Naive thymus-derived CD4-positive, alpha-beta T cell (primary cell): ENCODE measurements at regions of chr6 and their contacts with region 1.

Region 1: DNA sequence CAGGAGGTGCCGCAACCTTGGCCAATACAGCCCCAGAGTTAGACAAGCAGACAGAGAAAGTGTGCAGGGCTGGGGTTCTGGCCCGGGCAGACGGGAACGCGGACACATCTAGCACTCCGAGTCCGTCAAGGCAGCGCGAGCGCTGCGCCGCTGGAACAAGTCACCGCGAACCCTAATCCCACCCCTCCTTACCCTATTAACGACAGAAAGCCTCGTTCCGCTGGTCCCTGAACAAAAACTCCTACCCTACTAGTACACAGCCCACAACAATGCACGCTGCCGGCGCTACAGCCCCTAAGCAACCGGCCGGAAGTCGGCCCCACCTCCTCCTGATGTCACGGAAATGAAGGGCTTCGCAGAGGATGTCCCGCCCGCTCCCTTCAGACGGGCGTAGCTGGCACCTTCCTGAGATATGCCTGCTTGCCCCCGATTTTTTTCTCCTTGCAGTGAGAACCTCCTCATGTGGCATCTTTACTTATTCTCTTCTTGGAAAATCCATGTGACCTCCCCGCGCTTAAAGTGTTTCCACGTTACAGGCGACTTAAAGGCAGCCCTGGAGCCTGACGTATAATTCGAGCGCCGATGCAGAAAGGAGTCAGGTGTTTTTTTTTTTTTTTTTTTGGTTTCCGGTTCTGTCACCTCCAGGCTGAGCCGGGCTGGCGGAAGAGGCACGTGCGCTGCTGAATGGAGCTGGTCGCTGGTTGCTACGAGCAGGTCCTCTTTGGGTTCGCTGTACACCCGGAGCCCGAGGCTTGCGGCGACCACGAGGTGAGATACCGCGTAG is at the starts of genes C6orf52 and PAK1IP1:
- DNase-seq: peak; percentile 77 to 97 (median 96)
- ATAC-seq: peak; percentile 95
- H3K4me3 ChIP-seq: peak within 1 kb of the TSS; percentile 99
- H3K4me3 Mint-ChIP-seq: peak within 1 kb of the TSS; percentile 88 to 98 (median 94)
- H3K27ac ChIP-seq: peak within 1 kb of the TSS; percentile 90
- H3K27ac Mint-ChIP-seq: peak within 1 kb of the TSS; percentile 99 to 100 (median 100)
- H3K4me1 ChIP-seq: peaks cover 13 to 18% of the 10 kb centered on the region in 2 donors
- H3K4me1 Mint-ChIP-seq: peaks cover 20 to 52% (median 49%) of the 10 kb centered on the region in 7 donors
- H3K27me3 ChIP-seq: no peaks in the 10 kb centered on the region
- H3K27me3 Mint-ChIP-seq: peaks cover 0 to 4% (median 0%) of the 10 kb centered on the region in 5 donors
- total RNA-seq, gene C6orf52: 1.2 to 1.9 TPM in 2 of 5 experiments, not detected in the others
- total RNA-seq, gene PAK1IP1: 5.2 to 15.2 (median 8.0) TPM

Region 2: DNA sequence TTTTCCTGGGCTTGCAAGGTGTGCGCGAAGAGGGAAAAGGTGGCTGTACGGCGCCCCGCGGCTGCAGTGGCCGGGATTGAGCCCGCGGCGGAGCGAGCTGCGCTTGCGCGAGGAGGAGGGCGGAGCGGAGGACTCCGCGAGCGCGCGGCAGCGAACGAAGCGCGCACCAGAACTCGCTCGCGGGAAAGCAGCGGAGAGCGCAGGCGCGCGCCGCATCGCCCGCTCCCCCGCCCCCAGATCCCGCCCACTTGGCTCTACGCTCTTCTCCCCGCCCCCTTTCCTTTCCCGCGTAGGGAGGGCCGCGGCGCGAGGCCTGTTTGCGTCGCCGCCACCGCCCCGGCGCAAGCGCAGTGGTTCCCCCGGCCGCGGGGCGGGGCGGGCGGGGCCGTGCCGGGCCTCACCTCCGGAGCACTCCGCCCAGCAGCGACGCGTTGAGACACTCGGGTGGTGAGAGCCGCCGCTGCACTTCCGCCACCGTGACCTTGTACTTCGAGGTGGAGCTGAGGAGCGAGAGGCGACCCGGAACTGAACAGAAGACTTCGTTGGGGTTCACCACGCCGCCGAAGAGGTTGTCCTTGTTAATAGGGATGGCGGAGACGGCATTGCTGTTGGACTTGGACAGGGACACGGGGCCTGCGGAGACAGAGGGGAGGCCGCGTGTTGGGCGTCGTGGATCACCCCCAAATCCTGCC is 290.2 kb before region 1 on chr6:
- CTCF ChIA-PET with region 1: no interaction called
- POLR2A ChIA-PET with region 1: interaction called, 3 read pairs
- intact Hi-C with region 1: loop called (anchors 1 kb)
- DNase-seq: peak; percentile 77 to 90 (median 83)
- ATAC-seq: peak; percentile 93
- H3K4me3 ChIP-seq: peak overlapping the region; percentile 77
- H3K4me3 Mint-ChIP-seq: peak overlapping the region; percentile 79 to 91 (median 84)
- H3K27ac ChIP-seq: peak overlapping the region; percentile 9
- H3K27ac Mint-ChIP-seq: peak overlapping the region in 8 of 9 donors; percentile 41 to 90 (median 72)
- H3K4me1 ChIP-seq: peaks cover 10 to 12% of the 10 kb centered on the region in 2 donors
- H3K4me1 Mint-ChIP-seq: peaks cover 6 to 20% (median 14%) of the 10 kb centered on the region in 7 donors
- H3K27me3 ChIP-seq: peaks cover 0 to 9% of the 10 kb centered on the region in 2 donors
- H3K27me3 Mint-ChIP-seq: peaks cover 48 to 90% (median 66%) of the 10 kb centered on the region in 5 donors

Region 3: GRCh38 chr6:10478187-10479040 is 216.1 kb before region 1 on chr6:
- CTCF ChIA-PET with region 1: no interaction called
- POLR2A ChIA-PET with region 1: no interaction called
- intact Hi-C with region 1: no loop called
- DNase-seq: peak in 3 of 9 donors; percentile 4 to 31 (median 15)
- ATAC-seq: no peak
- H3K4me3 ChIP-seq: no peak overlapping the region
- H3K4me3 Mint-ChIP-seq: no peak overlapping the region
- H3K27ac ChIP-seq: no peak overlapping the region
- H3K27ac Mint-ChIP-seq: no peak overlapping the region
- H3K4me1 ChIP-seq: no peaks in the 10 kb centered on the region
- H3K4me1 Mint-ChIP-seq: peaks cover 0 to 3% (median 0%) of the 10 kb centered on the region in 7 donors
- H3K27me3 ChIP-seq: no peaks in the 10 kb centered on the region
- H3K27me3 Mint-ChIP-seq: peaks cover 0 to 36% (median 22%) of the 10 kb centered on the region in 5 donors

Region 4: DNA sequence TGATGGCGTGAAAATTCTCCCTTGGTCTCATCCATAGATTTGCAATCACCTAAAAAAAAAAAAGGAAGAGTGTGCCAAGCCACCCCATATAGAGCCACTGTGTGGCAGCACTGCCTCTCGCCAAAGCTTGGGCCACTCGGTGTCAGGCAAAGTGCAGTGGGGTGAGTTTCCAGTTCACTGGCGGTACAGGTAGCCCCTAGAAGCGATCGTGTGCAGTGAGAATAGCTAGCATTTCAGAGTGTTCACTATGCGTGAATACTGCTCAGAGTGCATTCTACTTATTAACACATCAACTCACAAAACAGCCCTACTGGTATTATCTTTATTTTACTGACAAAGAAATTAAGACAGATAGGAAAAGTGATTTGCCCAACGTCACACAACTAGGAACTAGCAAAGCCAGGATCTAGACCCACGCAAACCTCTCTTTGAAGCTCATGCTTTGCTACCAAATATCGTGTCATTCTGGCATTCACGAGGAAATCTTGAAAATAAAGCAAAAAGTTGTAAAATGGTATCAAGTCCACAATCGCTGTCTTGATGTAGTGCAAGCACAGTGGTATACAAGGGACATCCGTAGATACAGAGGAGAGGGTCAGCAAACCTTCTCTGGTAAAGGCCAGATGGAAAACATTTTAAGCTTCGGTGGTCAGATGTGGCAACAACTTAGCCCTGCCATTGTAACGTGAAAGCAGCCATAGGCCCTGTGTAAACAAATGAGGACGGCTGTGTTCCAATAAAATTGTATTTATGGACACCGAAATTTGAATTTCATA is 183.7 kb before region 1 on chr6:
- CTCF ChIA-PET with region 1: no interaction called
- POLR2A ChIA-PET with region 1: no interaction called
- intact Hi-C with region 1: loop called (anchors 1 to 2 kb)
- DNase-seq: peak in 8 of 9 donors; percentile 9 to 53 (median 39)
- ATAC-seq: peak; percentile 94
- H3K4me3 ChIP-seq: no peak overlapping the region
- H3K4me3 Mint-ChIP-seq: peak overlapping the region in 5 of 10 donors; percentile 8 to 40 (median 12)
- H3K27ac ChIP-seq: no peak overlapping the region
- H3K27ac Mint-ChIP-seq: peak overlapping the region in 1 of 9 donors; percentile 28
- H3K4me1 ChIP-seq: no peaks in the 10 kb centered on the region
- H3K4me1 Mint-ChIP-seq: peaks cover 0 to 7% (median 5%) of the 10 kb centered on the region in 7 donors
- H3K27me3 ChIP-seq: no peaks in the 10 kb centered on the region
- H3K27me3 Mint-ChIP-seq: peaks cover 0 to 11% (median 7%) of the 10 kb centered on the region in 5 donors

Region 5: DNA sequence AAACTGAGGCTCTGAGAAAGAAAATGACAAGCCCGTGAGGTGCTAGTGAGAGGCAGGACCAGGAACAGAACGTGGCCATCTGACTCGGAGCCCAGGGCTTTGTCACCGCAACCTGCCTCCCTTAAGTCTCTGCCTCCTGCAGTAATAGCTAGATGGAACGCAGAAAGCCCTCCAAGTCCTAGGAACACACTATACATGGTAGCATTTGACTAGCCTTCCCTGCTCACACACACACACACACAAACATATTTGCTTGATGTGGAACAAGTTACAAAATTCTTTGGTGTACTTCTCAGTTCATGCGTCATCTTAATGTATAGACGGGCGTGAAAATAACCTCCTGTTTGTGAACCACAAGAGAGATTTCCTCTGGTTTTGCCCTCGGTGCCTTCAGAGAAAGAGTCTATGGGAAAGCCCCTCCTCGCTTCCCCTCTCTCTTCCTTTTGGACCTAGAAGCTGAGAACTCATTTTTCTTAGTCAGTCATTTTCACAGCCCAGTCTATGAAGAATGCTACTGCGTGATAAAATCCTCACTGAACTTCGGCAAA is 38.9 kb before region 1 on chr6:
- CTCF ChIA-PET with region 1: no interaction called
- POLR2A ChIA-PET with region 1: no interaction called
- intact Hi-C with region 1: loop called in 1 of 2 experiments (anchors 1 kb)
- DNase-seq: peak in 6 of 9 donors; percentile 3 to 32 (median 20)
- ATAC-seq: peak; percentile 63
- H3K4me3 ChIP-seq: no peak overlapping the region
- H3K4me3 Mint-ChIP-seq: peak overlapping the region in 4 of 10 donors; percentile 4 to 71 (median 38)
- H3K27ac ChIP-seq: no peak overlapping the region
- H3K27ac Mint-ChIP-seq: peak overlapping the region in 1 of 9 donors; percentile 20
- H3K4me1 ChIP-seq: peaks cover 5 to 8% of the 10 kb centered on the region in 2 donors
- H3K4me1 Mint-ChIP-seq: peaks cover 0 to 21% (median 11%) of the 10 kb centered on the region in 7 donors
- H3K27me3 ChIP-seq: no peaks in the 10 kb centered on the region
- H3K27me3 Mint-ChIP-seq: peaks cover 9 to 50% (median 32%) of the 10 kb centered on the region in 5 donors

Region 6: DNA sequence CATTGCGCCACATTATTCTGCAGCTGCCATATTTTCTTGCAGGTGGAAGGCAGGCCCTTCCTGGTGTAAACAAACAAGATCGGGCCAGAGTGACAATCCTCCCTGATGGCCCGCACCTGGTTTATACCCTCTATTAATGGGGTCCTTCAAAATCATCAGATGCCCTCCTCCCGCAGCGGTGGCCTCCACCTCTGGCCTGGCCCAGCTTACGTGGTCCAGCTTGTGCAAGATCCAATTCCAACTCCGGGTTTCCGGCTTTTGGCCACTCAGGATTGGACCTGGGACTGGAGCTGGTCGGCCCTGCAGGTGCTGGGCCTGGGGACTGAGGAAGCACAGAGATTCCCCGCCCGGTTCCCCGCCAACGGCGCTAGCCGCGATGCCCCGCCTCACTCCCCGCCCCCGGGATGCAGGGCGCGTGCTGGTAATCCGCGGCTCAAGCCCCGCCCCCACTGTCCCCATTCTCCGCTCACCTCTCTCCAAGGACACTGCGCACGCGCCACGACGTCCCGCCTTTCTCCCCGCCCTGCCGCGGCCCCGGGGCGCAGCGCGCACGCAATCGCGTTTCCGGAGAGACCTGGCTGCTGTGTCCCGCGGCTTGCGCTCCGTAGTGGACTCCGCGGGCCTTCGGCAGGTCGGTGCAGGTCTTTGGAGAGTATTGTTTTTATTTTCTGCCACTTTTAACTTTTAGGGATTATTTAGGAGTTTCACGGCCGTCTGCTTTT is 52.9 kb after region 1 on chr6 and contains the start of gene TMEM14B:
- CTCF ChIA-PET with region 1: no interaction called
- POLR2A ChIA-PET with region 1: interaction called, 28 read pairs
- intact Hi-C with region 1: loop called (anchors 1 kb)
- DNase-seq: peak; percentile 97 to 100 (median 99)
- ATAC-seq: peak; percentile 99
- H3K4me3 ChIP-seq: peak within 1 kb of the TSS; percentile 71
- H3K4me3 Mint-ChIP-seq: peak within 1 kb of the TSS; percentile 85 to 98 (median 91)
- H3K27ac ChIP-seq: peak within 1 kb of the TSS; percentile 79
- H3K27ac Mint-ChIP-seq: peak within 1 kb of the TSS; percentile 82 to 99 (median 96)
- H3K4me1 ChIP-seq: peaks cover 12 to 37% of the 10 kb centered on the region in 2 donors
- H3K4me1 Mint-ChIP-seq: peaks cover 24 to 67% (median 62%) of the 10 kb centered on the region in 7 donors
- H3K27me3 ChIP-seq: no peaks in the 10 kb centered on the region
- H3K27me3 Mint-ChIP-seq: no peaks in the 10 kb centered on the region
- total RNA-seq, gene TMEM14B: 48.6 to 93.8 (median 75.4) TPM

Region 7: GRCh38 chr6:10837995-10838793 is 143.7 kb after region 1 on chr6 and contains the start of gene MAK:
- CTCF ChIA-PET with region 1: no interaction called
- POLR2A ChIA-PET with region 1: no interaction called
- intact Hi-C with region 1: loop called (anchors 1 kb)
- DNase-seq: peak; percentile 80 to 93 (median 86)
- ATAC-seq: peak; percentile 98
- H3K4me3 ChIP-seq: peak within 1 kb of the TSS; percentile 59
- H3K4me3 Mint-ChIP-seq: peak within 1 kb of the TSS; percentile 71 to 89 (median 78)
- H3K27ac ChIP-seq: no peak within 1 kb of the TSS
- H3K27ac Mint-ChIP-seq: peak within 1 kb of the TSS in 4 of 9 donors; percentile 21 to 87 (median 55)
- H3K4me1 ChIP-seq: peaks cover 14 to 20% of the 10 kb centered on the region in 2 donors
- H3K4me1 Mint-ChIP-seq: peaks cover 10 to 22% (median 19%) of the 10 kb centered on the region in 7 donors
- H3K27me3 ChIP-seq: peaks cover 23 to 29% of the 10 kb centered on the region in 2 donors
- H3K27me3 Mint-ChIP-seq: peaks cover 52 to 65% (median 61%) of the 10 kb centered on the region in 5 donors
- total RNA-seq, gene MAK: 0.34 to 0.42 TPM in 2 of 5 experiments, not detected in the others